Activated naive CD4-positive, alpha-beta T cell treated with anti-CD3 and anti-CD28 coated beads for 36 hours (primary cell): ENCODE measurements at regions of chr5 and their contacts with region 1.

Region 1: GRCh38 chr5:152142840-152143469 is 218.3 kb upstream of the GLRA1 start:
- DNase-seq: peak; percentile 77
- H3K4me3 Mint-ChIP-seq: no peak overlapping the region
- H3K27ac Mint-ChIP-seq: no peak overlapping the region
- H3K4me1 Mint-ChIP-seq: no peaks in the 10 kb centered on the region
- H3K27me3 Mint-ChIP-seq: no peaks in the 10 kb centered on the region

Region 2: GRCh38 chr5:151659001-151659754 is 483.8 kb before region 1 on chr5:
- CTCF ChIA-PET with region 1: no interaction called
- intact Hi-C with region 1: loop called (anchors 1 kb)
- DNase-seq: peak; percentile 87
- H3K4me3 Mint-ChIP-seq: no peak overlapping the region
- H3K27ac Mint-ChIP-seq: no peak overlapping the region
- H3K4me1 Mint-ChIP-seq: peaks cover 17% of the 10 kb centered on the region
- H3K27me3 Mint-ChIP-seq: no peaks in the 10 kb centered on the region

Region 3: DNA sequence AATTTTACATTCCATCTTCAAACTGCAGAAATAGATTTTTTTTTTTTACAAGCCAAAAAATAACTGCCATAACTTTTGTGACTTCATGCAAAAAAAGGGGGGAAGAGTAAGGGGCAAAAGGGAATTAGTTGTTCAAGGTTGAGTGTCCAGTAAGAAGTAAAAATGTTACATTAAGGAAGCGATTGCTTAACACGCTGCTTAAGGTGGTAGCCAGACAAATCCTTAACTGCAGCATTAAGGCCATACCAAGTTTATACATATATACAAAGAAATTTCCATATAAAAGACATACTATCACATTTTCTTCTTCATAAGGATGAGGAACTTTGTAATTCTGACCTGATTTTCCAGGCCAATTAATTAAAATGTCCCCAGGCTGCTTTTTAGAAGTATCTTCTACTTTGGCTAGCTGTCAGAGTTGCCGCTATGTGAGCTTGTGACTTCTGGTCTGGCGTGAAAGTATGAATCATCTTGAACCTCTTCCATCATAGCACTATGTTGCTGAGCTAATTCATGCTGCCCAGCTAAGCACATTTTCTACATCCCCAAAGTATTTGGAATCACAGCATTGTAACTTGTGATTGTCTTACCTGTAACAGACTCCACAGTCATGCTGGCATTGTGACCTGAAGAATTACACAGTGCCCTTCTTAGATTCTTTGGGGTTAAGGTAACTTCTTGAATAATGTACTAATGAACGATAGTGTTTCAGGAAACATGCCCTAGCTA is 331.2 kb before region 1 on chr5:
- CTCF ChIA-PET with region 1: interaction called, 13 read pairs
- intact Hi-C with region 1: no loop called
- DNase-seq: no peak
- H3K4me3 Mint-ChIP-seq: no peak overlapping the region
- H3K27ac Mint-ChIP-seq: no peak overlapping the region
- H3K4me1 Mint-ChIP-seq: peaks cover 31% of the 10 kb centered on the region
- H3K27me3 Mint-ChIP-seq: no peaks in the 10 kb centered on the region

Region 4: GRCh38 chr5:151958111-151958510 is 184.8 kb before region 1 on chr5:
- CTCF ChIA-PET with region 1: interaction called, 3 read pairs
- intact Hi-C with region 1: loop called (anchors 5 kb)
- DNase-seq: no peak
- H3K4me3 Mint-ChIP-seq: no peak overlapping the region
- H3K27ac Mint-ChIP-seq: no peak overlapping the region
- H3K4me1 Mint-ChIP-seq: peaks cover 40% of the 10 kb centered on the region
- H3K27me3 Mint-ChIP-seq: no peaks in the 10 kb centered on the region

Region 5: DNA sequence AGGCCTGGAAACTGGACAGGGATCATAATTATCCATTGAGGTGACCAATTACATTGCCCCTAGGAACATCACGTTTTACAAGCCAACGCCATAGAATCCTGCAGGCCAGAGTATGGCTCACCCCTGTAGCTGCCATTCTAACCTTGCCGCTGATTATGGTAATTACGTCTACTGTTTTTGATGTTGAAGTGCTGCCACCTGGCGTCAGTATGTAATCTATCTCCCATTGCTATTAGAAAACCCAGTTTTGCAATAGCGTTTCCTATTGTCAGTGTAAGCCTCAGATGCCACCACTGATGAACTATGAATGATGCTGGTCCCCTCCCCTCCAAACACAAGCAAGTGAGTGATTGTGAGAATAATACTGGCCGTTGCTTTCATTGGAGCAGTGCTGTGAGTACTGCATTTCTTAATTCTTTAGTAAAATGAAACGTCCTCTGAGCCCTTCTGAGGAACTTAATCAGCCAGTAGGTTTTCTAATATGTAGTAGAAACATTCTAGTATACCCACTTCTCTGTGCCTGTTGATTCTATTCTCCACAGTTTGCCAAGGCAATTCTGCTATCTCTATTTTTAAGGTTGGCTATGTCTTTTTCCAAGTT is 362.6 kb after region 1 on chr5:
- CTCF ChIA-PET with region 1: no interaction called
- intact Hi-C with region 1: loop called (anchors 1 kb)
- DNase-seq: peak; percentile 71
- H3K4me3 Mint-ChIP-seq: no peak overlapping the region
- H3K27ac Mint-ChIP-seq: no peak overlapping the region
- H3K4me1 Mint-ChIP-seq: peaks cover 2% of the 10 kb centered on the region
- H3K27me3 Mint-ChIP-seq: peaks cover 12% of the 10 kb centered on the region